Activated B cell treated with CpG ODN at 0.5 μM for 24 hours (primary cell): ENCODE measurements at regions of chr13 and their contacts with region 1.

Region 1: GRCh38 chr13:80048802-80049201 is 292.1 kb downstream of the SPRY2 start:
- DNase-seq: peak; percentile 55
- ATAC-seq: peak; percentile 96
- H3K4me3 Mint-ChIP-seq: peak overlapping the region; percentile 33
- H3K27ac Mint-ChIP-seq: peak overlapping the region; percentile 20
- H3K4me1 Mint-ChIP-seq: peaks cover 24% of the 10 kb centered on the region
- H3K27me3 Mint-ChIP-seq: no peaks in the 10 kb centered on the region
- CTCF ChIP-seq: no peak

Region 2: GRCh38 chr13:79810669-79811068 is 238.1 kb before region 1 on chr13:
- CTCF ChIA-PET with region 1: no interaction called
- POLR2A ChIA-PET with region 1: no interaction called
- intact Hi-C with region 1: loop called (anchors 5 kb)
- DNase-seq: no peak
- ATAC-seq: no peak
- H3K4me3 Mint-ChIP-seq: no peak overlapping the region
- H3K27ac Mint-ChIP-seq: no peak overlapping the region
- H3K4me1 Mint-ChIP-seq: peaks cover 26% of the 10 kb centered on the region
- H3K27me3 Mint-ChIP-seq: no peaks in the 10 kb centered on the region
- CTCF ChIP-seq: no peak

Region 3: GRCh38 chr13:80033286-80033685 is 15.5 kb before region 1 on chr13:
- CTCF ChIA-PET with region 1: no interaction called
- POLR2A ChIA-PET with region 1: no interaction called
- intact Hi-C with region 1: loop called (anchors 2 kb)
- DNase-seq: no peak
- ATAC-seq: no peak
- H3K4me3 Mint-ChIP-seq: no peak overlapping the region
- H3K27ac Mint-ChIP-seq: no peak overlapping the region
- H3K4me1 Mint-ChIP-seq: peaks cover 19% of the 10 kb centered on the region
- H3K27me3 Mint-ChIP-seq: no peaks in the 10 kb centered on the region
- CTCF ChIP-seq: no peak

Region 4: DNA sequence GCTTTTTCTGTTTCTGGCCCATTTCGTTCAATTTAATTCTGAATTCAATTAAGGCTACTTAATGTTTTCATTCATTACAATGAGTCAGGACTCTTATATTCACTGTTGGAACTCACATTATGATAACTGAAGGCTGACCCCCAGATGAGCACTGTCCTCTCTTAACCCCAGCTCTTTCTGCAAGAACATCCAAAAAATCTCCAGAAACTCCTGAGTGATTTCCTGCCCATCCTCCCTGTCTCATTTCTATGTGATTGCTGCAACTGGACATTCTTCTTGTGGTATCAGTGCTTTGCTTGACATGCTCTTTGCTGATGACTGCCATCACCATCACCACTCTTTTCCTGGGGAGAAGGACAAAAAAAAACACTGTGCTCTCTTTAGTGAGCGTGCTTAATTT is 51.8 kb after region 1 on chr13:
- CTCF ChIA-PET with region 1: no interaction called
- POLR2A ChIA-PET with region 1: no interaction called
- intact Hi-C with region 1: no loop called
- DNase-seq: no peak
- ATAC-seq: no peak
- H3K4me3 Mint-ChIP-seq: no peak overlapping the region
- H3K27ac Mint-ChIP-seq: no peak overlapping the region
- H3K4me1 Mint-ChIP-seq: no peaks in the 10 kb centered on the region
- H3K27me3 Mint-ChIP-seq: no peaks in the 10 kb centered on the region
- CTCF ChIP-seq: no peak

Region 5: GRCh38 chr13:80399340-80400163 is 350.8 kb after region 1 on chr13:
- CTCF ChIA-PET with region 1: no interaction called
- POLR2A ChIA-PET with region 1: no interaction called
- intact Hi-C with region 1: loop called (anchors 2 kb)
- DNase-seq: peak; percentile 14
- ATAC-seq: peak; percentile 64
- H3K4me3 Mint-ChIP-seq: peak overlapping the region; percentile 49
- H3K27ac Mint-ChIP-seq: peak overlapping the region; percentile 80
- H3K4me1 Mint-ChIP-seq: peaks cover 44% of the 10 kb centered on the region
- H3K27me3 Mint-ChIP-seq: no peaks in the 10 kb centered on the region
- CTCF ChIP-seq: no peak

Region 6: GRCh38 chr13:80454245-80454644 is 405.4 kb after region 1 on chr13:
- CTCF ChIA-PET with region 1: no interaction called
- POLR2A ChIA-PET with region 1: no interaction called
- intact Hi-C with region 1: loop called (anchors 5 kb)
- DNase-seq: no peak
- ATAC-seq: peak; percentile 89
- H3K4me3 Mint-ChIP-seq: peak overlapping the region; percentile 26
- H3K27ac Mint-ChIP-seq: peak overlapping the region; percentile 68
- H3K4me1 Mint-ChIP-seq: peaks cover 59% of the 10 kb centered on the region
- H3K27me3 Mint-ChIP-seq: no peaks in the 10 kb centered on the region
- CTCF ChIP-seq: no peak

Region 7: GRCh38 chr13:80591976-80592740 is 543.4 kb after region 1 on chr13:
- CTCF ChIA-PET with region 1: no interaction called
- POLR2A ChIA-PET with region 1: no interaction called
- intact Hi-C with region 1: no loop called
- DNase-seq: no peak
- ATAC-seq: no peak
- H3K4me3 Mint-ChIP-seq: no peak overlapping the region
- H3K27ac Mint-ChIP-seq: no peak overlapping the region
- H3K4me1 Mint-ChIP-seq: no peaks in the 10 kb centered on the region
- H3K27me3 Mint-ChIP-seq: no peaks in the 10 kb centered on the region
- CTCF ChIP-seq: no peak

Region 8: DNA sequence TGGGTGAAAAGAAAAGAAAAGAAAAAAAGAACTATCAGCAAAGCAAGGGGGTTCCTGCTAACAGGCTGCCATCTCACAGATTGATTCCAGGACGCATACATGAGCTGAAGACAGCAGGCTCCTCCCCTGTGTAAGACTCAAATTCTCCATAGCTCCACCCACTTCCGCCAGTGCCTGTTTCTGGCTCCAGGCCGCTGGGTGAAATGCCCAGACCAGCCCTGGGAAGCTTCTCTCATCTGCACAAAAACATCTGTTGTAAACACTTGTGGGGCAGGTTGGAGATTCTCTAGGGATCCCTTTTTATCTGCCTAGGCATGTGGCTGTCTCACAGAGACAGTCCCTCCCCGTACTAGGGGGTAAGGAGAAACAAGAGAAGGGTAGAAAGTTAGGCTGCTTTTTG is 1346.6 kb after region 1 on chr13:
- CTCF ChIA-PET with region 1: no interaction called
- POLR2A ChIA-PET with region 1: no interaction called
- intact Hi-C with region 1: no loop called
- DNase-seq: no peak
- ATAC-seq: no peak
- H3K4me3 Mint-ChIP-seq: no peak overlapping the region
- H3K27ac Mint-ChIP-seq: no peak overlapping the region
- H3K4me1 Mint-ChIP-seq: no peaks in the 10 kb centered on the region
- H3K27me3 Mint-ChIP-seq: no peaks in the 10 kb centered on the region
- CTCF ChIP-seq: no peak